ENCODE measurements at regions of chr20 and their contacts with region 1.

Region 1: GRCh38 chr20:23655491-23656211 is 17.9 kb upstream of the CST3 start:
- DNase-seq: no peak
- H3K4me3 Mint-ChIP-seq: no peak overlapping the region
- H3K27ac Mint-ChIP-seq: peak overlapping the region; percentile 35
- H3K4me1 Mint-ChIP-seq: no peaks in the 10 kb centered on the region
- H3K27me3 Mint-ChIP-seq: no peaks in the 10 kb centered on the region
- CTCF ChIP-seq: no peak

Region 2: GRCh38 chr20:23629017-23629541 is 26.6 kb before region 1 on chr20:
- CTCF ChIA-PET with region 1: no interaction called
- POLR2A ChIA-PET with region 1: interaction called, 10 read pairs
- intact Hi-C with region 1: no loop called
- DNase-seq: peak; percentile 96
- H3K4me3 Mint-ChIP-seq: no peak overlapping the region
- H3K27ac Mint-ChIP-seq: peak overlapping the region; percentile 92
- H3K4me1 Mint-ChIP-seq: peaks cover 37% of the 10 kb centered on the region
- H3K27me3 Mint-ChIP-seq: no peaks in the 10 kb centered on the region
- CTCF ChIP-seq: no peak

Region 3: DNA sequence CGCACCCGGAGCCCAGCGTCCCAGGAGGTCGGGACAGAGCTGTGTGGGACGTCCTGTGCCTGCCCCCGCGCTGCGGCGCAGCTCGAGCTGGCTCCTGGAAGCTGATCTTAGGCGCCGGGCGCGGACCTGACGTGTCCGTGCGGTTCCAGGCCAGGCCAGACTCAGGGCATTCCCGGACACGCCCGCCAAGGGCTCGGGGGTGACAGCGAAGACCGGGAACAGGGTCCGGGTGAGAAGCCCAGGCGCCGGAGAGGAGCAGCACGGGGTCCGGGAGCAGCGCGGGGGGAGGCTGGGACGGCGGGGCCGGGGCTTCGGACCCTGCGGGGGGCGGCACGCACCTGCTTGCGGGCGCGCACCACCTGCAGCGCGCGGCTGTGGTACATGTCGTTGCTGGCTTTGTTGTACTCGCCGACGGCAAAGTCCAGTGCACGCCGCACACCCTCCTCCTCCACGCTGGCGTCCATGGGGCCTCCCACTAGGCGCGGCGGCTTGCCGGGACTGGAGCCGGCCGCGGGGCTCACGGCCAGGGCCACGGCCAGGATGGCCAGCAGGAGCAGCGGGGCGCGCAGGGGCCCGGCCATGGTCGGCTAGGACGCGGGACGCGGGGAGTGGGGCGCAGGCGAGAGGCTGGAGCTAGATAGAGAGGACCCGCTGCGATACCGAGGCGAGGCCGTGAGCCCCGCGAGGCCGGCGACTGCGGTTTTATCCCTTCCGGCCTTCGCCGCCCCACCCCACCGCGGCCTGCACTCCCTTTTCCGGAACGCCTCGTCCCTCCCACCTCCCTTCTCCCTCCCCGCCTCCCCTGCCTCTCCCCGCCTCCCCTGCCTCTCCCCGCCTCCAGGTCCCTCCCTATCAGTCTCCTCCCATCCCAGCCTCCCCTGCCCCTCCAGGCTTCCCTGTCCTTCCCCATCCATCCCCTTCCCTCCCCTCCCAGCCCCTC is 18.1 kb before region 1 on chr20 and contains the start of gene CST3:
- CTCF ChIA-PET with region 1: interaction called, 4 read pairs
- POLR2A ChIA-PET with region 1: interaction called, 16 read pairs
- intact Hi-C with region 1: no loop called
- DNase-seq: peak; percentile 91
- H3K4me3 Mint-ChIP-seq: peak within 1 kb of the TSS; percentile 91
- H3K27ac Mint-ChIP-seq: peak within 1 kb of the TSS; percentile 90
- H3K4me1 Mint-ChIP-seq: peaks cover 42% of the 10 kb centered on the region
- H3K27me3 Mint-ChIP-seq: no peaks in the 10 kb centered on the region
- CTCF ChIP-seq: no peak
- total RNA-seq, gene CST3: 303 and 315 TPM in 2 replicates

Region 4: GRCh38 chr20:23686046-23686750 is 30.5 kb after region 1 on chr20:
- CTCF ChIA-PET with region 1: no interaction called
- POLR2A ChIA-PET with region 1: no interaction called
- intact Hi-C with region 1: no loop called
- DNase-seq: no peak
- H3K4me3 Mint-ChIP-seq: no peak overlapping the region
- H3K27ac Mint-ChIP-seq: no peak overlapping the region
- H3K4me1 Mint-ChIP-seq: no peaks in the 10 kb centered on the region
- H3K27me3 Mint-ChIP-seq: no peaks in the 10 kb centered on the region
- CTCF ChIP-seq: no peak